IMR-90 (cell line): ENCODE measurements at regions of chr11 and their contacts with region 1.

Region 1: GRCh38 chr11:48109046-48109666 is 107.5 kb upstream of the OR4B1 start:
- DNase-seq: peak; percentile 63
- ATAC-seq: peak; percentile 62
- H3K4me3 ChIP-seq: no peak overlapping the region
- H3K27ac ChIP-seq: peak overlapping the region; percentile 25; the same call in 1 of the 2 replicates
- H3K4me1 ChIP-seq: peaks cover 9% of the 10 kb centered on the region
- H3K27me3 ChIP-seq: no peaks in the 10 kb centered on the region
- CTCF ChIP-seq: peak; percentile 57
- POLR2A ChIP-seq: no peak
- RAD21 ChIP-seq: peak; percentile 60

Region 2: GRCh38 chr11:47847892-47848635 is 261.1 kb before region 1 on chr11 and contains the start of gene NUP160:
- CTCF ChIA-PET with region 1: no interaction called
- POLR2A ChIA-PET with region 1: no interaction called
- dilution Hi-C with region 1: no loop called
- in situ Hi-C with region 1: loop called (anchors 10 kb)
- intact Hi-C with region 1: loop called (anchors 1 kb)
- DNase-seq: peak; percentile 29
- ATAC-seq: peak; percentile 94
- H3K4me3 ChIP-seq: peak within 1 kb of the TSS; percentile 92
- H3K27ac ChIP-seq: peak within 1 kb of the TSS; percentile 80
- H3K4me1 ChIP-seq: no peaks in the 10 kb centered on the region
- H3K27me3 ChIP-seq: no peaks in the 10 kb centered on the region
- CTCF ChIP-seq: no peak
- POLR2A ChIP-seq: peak; percentile 59; the same call in 1 of the 2 replicates
- RAD21 ChIP-seq: no peak
- total RNA-seq, gene NUP160: 33.9 and 35.0 TPM in 2 replicates

Region 3: GRCh38 chr11:47932544-47932943 is 176.6 kb before region 1 on chr11:
- CTCF ChIA-PET with region 1: interaction called, 52 read pairs
- POLR2A ChIA-PET with region 1: interaction called, 4 read pairs
- dilution Hi-C with region 1: no loop called
- in situ Hi-C with region 1: loop called (anchors 5 kb)
- intact Hi-C with region 1: loop called (anchors 1 kb)
- DNase-seq: no peak
- ATAC-seq: no peak
- H3K4me3 ChIP-seq: no peak overlapping the region
- H3K27ac ChIP-seq: no peak overlapping the region
- H3K4me1 ChIP-seq: peaks cover 4% of the 10 kb centered on the region
- H3K27me3 ChIP-seq: no peaks in the 10 kb centered on the region
- CTCF ChIP-seq: no peak
- POLR2A ChIP-seq: no peak
- RAD21 ChIP-seq: no peak

Region 4: GRCh38 chr11:48001438-48002021 is 107.6 kb before region 1 on chr11:
- CTCF ChIA-PET with region 1: interaction called, 3 read pairs
- POLR2A ChIA-PET with region 1: no interaction called
- dilution Hi-C with region 1: no loop called
- in situ Hi-C with region 1: no loop called
- intact Hi-C with region 1: loop called (anchors 5 kb)
- DNase-seq: peak; percentile 94
- ATAC-seq: peak; percentile 75
- H3K4me3 ChIP-seq: no peak overlapping the region
- H3K27ac ChIP-seq: peak overlapping the region; percentile 16; the same call in 1 of the 2 replicates
- H3K4me1 ChIP-seq: peaks cover 37% of the 10 kb centered on the region
- H3K27me3 ChIP-seq: no peaks in the 10 kb centered on the region
- CTCF ChIP-seq: no peak
- POLR2A ChIP-seq: no peak
- RAD21 ChIP-seq: no peak